Panc1 (cell line): ENCODE measurements at regions of chr10 and their contacts with region 1.

Region 1: DNA sequence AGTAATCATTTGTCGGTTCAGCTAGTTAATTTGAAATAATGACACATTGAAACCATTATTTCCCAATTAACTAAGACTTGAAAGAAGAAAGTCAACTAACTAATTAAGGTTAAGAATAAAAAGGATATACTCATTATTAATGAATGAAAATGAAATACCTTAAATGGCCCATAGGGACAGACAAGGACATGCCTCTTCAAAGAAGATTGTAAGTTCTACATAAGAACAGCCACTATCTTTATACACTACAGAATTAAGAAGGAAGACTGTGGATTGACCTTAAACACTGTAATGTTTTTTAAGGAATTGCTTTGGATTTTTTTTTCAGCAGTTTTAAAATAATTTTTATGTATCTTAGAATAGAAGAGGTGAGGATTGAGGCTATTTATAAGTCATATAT is 60.7 kb downstream of the CSTF2T start:
- DNase-seq: no peak
- ATAC-seq: no peak
- H3K4me3 ChIP-seq: no peak overlapping the region
- H3K27ac ChIP-seq: no peak overlapping the region
- H3K4me1 ChIP-seq: no peaks in the 10 kb centered on the region
- H3K27me3 ChIP-seq: 0 out of 2 replicates have a peak, but pooled peaks cover 3% of the 10 kb centered on the region
- CTCF ChIP-seq: no peak; the same call in 1 of the 2 replicates

Region 2: GRCh38 chr10:51617576-51618235 is 21.0 kb before region 1 on chr10:
- CTCF ChIA-PET with region 1: interaction called, 10 read pairs
- POLR2A ChIA-PET with region 1: interaction called, 5 read pairs
- in situ Hi-C with region 1: no loop called
- intact Hi-C with region 1: no loop called
- DNase-seq: no peak
- ATAC-seq: no peak
- H3K4me3 ChIP-seq: no peak overlapping the region
- H3K27ac ChIP-seq: no peak overlapping the region
- H3K4me1 ChIP-seq: no peaks in the 10 kb centered on the region
- H3K27me3 ChIP-seq: no peaks in the 10 kb centered on the region
- CTCF ChIP-seq: no peak

Region 3: GRCh38 chr10:51892965-51893658 is 254.4 kb after region 1 on chr10:
- CTCF ChIA-PET with region 1: no interaction called
- POLR2A ChIA-PET with region 1: no interaction called
- in situ Hi-C with region 1: no loop called
- intact Hi-C with region 1: no loop called
- DNase-seq: no peak
- ATAC-seq: peak; percentile 60; the same call in 1 of the 2 replicates
- H3K4me3 ChIP-seq: no peak overlapping the region
- H3K27ac ChIP-seq: no peak overlapping the region
- H3K4me1 ChIP-seq: no peaks in the 10 kb centered on the region
- H3K27me3 ChIP-seq: no peaks in the 10 kb centered on the region
- CTCF ChIP-seq: peak; percentile 38